Right cardiac atrium (tissue), 5 donors: ENCODE measurements at regions of chr3 and their contacts with region 1.

Region 1: GRCh38 chr3:45593708-45594609 is 592 bp upstream of the LIMD1 start:
- DNase-seq: peak; percentile 75 to 92 (median 90)
- ATAC-seq: peak; percentile 89
- H3K4me3 ChIP-seq: peak overlapping the region; percentile 62
- H3K27ac ChIP-seq: peak overlapping the region; percentile 76
- H3K4me1 ChIP-seq: peaks cover 25% of the 10 kb centered on the region
- H3K27me3 ChIP-seq: no peaks in the 10 kb centered on the region

Region 2: GRCh38 chr3:45528429-45528828 is 65.5 kb before region 1 on chr3:
- intact Hi-C with region 1: no loop called
- DNase-seq: no peak
- ATAC-seq: no peak
- H3K4me3 ChIP-seq: no peak overlapping the region
- H3K27ac ChIP-seq: no peak overlapping the region
- H3K4me1 ChIP-seq: no peaks in the 10 kb centered on the region
- H3K27me3 ChIP-seq: no peaks in the 10 kb centered on the region

Region 3: GRCh38 chr3:45553996-45554666 is 39.8 kb before region 1 on chr3:
- intact Hi-C with region 1: no loop called
- DNase-seq: peak in 2 of 3 donors; percentile 75 to 78
- ATAC-seq: peak; percentile 10 to 23
- H3K4me3 ChIP-seq: no peak overlapping the region
- H3K27ac ChIP-seq: peak overlapping the region; percentile 55
- H3K4me1 ChIP-seq: peaks cover 19% of the 10 kb centered on the region
- H3K27me3 ChIP-seq: no peaks in the 10 kb centered on the region

Region 4: GRCh38 chr3:45656575-45657363 is 62.8 kb after region 1 on chr3:
- intact Hi-C with region 1: loop called (anchors 2 to 5 kb)
- DNase-seq: peak; percentile 94 to 96 (median 94)
- ATAC-seq: peak; percentile 88 to 92
- H3K4me3 ChIP-seq: no peak overlapping the region
- H3K27ac ChIP-seq: no peak overlapping the region
- H3K4me1 ChIP-seq: peaks cover 7% of the 10 kb centered on the region
- H3K27me3 ChIP-seq: no peaks in the 10 kb centered on the region